Endothelial cell of umbilical vein (primary cell): ENCODE measurements at regions of chr22 and their contacts with region 1.

Region 1: GRCh38 chr22:38201710-38202436 is at the start of gene MAFF:
- DNase-seq: peak; percentile 97
- H3K4me3 ChIP-seq: peak within 1 kb of the TSS; percentile 70 to 92 (median 87)
- H3K27ac ChIP-seq: peak within 1 kb of the TSS; percentile 92
- H3K4me1 ChIP-seq: peaks cover 24% of the 10 kb centered on the region
- H3K27me3 ChIP-seq: no peaks in the 10 kb centered on the region
- CTCF ChIP-seq: no peak
- POLR2A ChIP-seq: peak; percentile 93
- total RNA-seq, gene MAFF: 59.5 and 61.2 TPM in 2 replicates

Region 2: DNA sequence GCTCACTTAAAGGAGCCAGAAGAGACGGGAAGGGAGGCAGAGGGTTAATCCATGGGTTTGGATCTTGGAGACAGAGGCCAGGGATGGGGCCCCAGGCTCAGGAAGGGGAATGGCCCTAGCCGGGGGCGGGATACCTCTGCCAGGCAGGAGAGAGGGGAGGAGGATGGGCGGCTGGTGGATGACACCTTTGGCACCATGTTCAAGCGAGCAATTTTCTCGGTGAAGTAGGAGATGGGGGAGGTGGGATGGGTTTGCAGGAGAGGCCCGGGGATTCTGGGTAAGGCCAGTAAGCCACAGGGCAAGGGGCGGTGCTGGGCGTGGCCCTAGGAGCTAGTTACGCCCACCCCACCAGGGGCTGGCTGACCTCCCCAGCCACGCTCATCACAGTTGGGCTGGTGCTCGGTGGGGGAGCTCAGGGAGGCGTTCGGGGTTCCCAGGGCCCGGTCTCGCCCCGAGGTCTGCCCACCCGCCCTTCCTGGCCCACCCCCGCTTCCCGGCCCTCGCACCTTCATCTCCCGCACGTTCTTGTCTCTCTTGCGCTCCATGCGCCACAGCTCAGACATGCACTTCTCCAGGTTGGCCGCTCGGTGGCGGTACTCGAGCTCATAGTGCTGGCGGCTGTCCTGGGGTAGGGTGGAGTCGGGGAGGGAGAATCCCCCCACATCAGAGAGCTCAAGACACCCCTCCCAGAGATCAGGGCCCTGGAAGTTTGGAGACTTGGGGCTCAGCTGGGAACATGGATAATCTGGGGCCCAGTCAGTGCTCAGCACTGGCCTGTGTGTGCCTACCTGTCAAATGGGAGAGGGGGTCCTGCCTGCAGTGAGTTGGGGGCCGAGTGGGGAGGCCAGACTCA is 104.1 kb before region 1 on chr22:
- CTCF ChIA-PET with region 1: interaction called, 18 read pairs
- POLR2A ChIA-PET with region 1: no interaction called
- dilution Hi-C with region 1: no loop called
- intact Hi-C with region 1: no loop called
- DNase-seq: peak; percentile 12
- H3K4me3 ChIP-seq: no peak overlapping the region
- H3K27ac ChIP-seq: no peak overlapping the region
- H3K4me1 ChIP-seq: peaks cover 10% of the 10 kb centered on the region
- H3K27me3 ChIP-seq: peaks cover 0 to 3% of the 10 kb centered on the region in 2 experiments
- CTCF ChIP-seq: peak; percentile 36 to 60
- POLR2A ChIP-seq: no peak

Region 3: DNA sequence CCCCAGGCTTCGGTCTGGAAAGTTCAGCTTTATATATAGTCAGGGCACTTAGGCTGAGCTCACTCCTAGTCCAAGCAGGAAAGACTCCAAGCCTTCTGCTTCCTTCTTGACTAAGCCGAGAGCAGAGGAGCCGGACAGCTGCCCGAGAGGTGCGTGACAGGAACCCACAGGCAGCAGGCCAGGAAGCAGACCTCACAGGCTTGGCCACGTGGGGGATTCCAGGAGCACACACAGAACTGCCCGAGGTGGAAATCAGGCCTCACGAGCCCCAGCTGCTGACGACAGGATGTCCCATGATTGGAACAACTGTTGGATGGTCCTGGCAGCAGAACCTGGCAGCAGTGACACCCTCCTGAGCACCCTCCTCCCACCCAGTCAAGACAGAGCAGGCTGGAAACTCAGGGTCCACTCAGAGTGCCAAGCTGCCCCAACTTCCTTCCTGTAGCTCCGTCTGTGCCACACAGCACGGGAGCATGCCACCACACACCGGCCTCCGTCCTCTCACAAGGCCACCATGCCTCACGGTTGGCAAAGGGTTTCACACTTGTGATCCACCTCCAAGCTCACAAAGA is 25.6 kb before region 1 on chr22:
- CTCF ChIA-PET with region 1: interaction called, 14 read pairs
- POLR2A ChIA-PET with region 1: interaction called, 10 read pairs
- dilution Hi-C with region 1: no loop called
- intact Hi-C with region 1: loop called (anchors 1 kb)
- DNase-seq: peak; percentile 99
- H3K4me3 ChIP-seq: no peak overlapping the region
- H3K27ac ChIP-seq: peak overlapping the region; percentile 99
- H3K4me1 ChIP-seq: peaks cover 69% of the 10 kb centered on the region
- H3K27me3 ChIP-seq: no peaks in the 10 kb centered on the region
- CTCF ChIP-seq: no peak
- POLR2A ChIP-seq: no peak

Region 4: DNA sequence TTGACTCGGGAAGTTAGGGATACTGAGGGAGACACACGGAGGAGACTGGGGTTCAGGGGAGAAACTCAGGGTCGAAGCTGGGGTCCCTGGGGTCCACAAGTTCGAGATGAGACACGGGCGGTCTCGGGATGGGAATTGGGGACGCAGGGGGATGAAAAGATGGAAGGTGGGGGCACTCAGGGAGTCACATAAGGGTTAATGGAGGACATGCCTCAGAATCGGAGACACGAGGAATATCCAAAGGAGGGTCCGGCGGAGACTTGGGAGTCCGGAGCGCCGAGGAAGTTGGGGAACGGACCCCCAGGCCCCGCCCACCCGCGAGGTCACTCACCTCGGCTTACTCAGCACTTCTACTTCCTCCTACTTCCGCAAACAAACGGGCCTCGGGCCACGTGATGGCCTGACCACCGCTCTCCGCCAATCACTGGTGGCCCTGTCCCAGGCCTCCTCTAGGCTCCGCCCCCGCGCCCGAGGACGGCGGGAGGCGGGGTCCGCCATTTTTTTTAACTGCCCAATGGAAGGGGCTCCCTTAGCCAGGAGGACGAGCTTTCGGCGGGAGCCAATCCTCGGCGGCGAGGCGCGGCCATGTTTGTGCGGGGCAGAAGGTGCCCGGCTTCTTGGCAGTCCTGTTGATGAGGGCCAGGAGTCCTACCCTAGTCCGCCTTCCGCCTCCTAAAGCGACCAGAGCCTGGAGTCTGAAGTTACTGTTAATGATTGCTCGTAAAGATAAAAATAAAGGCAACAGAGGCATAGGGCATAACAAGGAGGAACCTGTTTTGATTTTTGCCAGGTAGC is 20.2 kb before region 1 on chr22 and contains the start of gene PLA2G6:
- CTCF ChIA-PET with region 1: interaction called, 14 read pairs
- POLR2A ChIA-PET with region 1: interaction called, 10 read pairs
- dilution Hi-C with region 1: no loop called
- intact Hi-C with region 1: loop called (anchors 1 kb)
- DNase-seq: peak; percentile 100
- H3K4me3 ChIP-seq: peak within 1 kb of the TSS in 2 of 3 experiments; percentile 5 to 28
- H3K27ac ChIP-seq: peak within 1 kb of the TSS; percentile 93
- H3K4me1 ChIP-seq: peaks cover 44% of the 10 kb centered on the region
- H3K27me3 ChIP-seq: no peaks in the 10 kb centered on the region
- CTCF ChIP-seq: no peak
- POLR2A ChIP-seq: peak; percentile 64
- total RNA-seq, gene PLA2G6: 10.3 and 11.1 TPM in 2 replicates